Left ventricle myocardium superior (tissue), 1 donor: ENCODE measurements at regions of chr10 and their contacts with region 1.

Region 1: DNA sequence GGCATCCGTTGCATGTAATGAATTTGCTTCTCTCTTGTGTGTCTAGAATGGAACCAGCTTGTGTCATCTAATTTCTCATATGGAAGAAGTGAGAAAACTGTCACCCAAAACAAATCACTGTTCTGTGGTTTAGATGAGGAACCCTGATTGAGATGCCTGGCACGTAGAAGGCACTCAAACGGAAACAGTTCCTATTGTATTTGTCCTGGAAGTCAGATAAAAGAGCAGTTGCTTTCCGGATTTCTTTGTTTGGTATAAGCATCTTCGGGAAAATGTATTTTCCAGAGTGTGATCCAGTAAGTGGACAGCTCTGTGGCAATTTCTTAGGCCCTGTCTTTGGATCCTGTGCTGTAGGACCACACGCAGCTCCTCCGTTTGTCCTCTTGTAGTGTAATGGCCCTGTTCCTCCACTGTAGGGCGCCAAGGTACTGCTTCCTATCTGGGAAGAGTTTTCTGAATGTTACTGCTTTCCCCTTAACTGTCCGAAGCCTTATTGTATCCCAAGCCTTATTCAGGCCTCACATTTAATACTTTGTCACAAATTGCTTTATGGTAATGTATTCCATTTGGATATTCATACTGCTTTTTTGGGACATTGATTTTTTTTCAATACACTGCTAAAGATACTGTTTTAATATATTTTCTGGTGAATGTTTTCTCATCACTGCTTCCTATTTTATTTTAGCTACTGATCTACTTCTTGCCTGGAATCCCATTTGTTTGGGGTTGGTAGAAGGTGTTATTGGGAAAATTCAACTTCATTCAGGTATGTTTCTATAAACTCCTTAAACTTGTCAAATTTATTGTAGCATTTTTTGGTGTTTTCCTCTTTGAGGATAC is 24.8 kb downstream of the INPP5F start:
- DNase-seq: peak; percentile 48
- ATAC-seq: peak; percentile 96

Region 2: DNA sequence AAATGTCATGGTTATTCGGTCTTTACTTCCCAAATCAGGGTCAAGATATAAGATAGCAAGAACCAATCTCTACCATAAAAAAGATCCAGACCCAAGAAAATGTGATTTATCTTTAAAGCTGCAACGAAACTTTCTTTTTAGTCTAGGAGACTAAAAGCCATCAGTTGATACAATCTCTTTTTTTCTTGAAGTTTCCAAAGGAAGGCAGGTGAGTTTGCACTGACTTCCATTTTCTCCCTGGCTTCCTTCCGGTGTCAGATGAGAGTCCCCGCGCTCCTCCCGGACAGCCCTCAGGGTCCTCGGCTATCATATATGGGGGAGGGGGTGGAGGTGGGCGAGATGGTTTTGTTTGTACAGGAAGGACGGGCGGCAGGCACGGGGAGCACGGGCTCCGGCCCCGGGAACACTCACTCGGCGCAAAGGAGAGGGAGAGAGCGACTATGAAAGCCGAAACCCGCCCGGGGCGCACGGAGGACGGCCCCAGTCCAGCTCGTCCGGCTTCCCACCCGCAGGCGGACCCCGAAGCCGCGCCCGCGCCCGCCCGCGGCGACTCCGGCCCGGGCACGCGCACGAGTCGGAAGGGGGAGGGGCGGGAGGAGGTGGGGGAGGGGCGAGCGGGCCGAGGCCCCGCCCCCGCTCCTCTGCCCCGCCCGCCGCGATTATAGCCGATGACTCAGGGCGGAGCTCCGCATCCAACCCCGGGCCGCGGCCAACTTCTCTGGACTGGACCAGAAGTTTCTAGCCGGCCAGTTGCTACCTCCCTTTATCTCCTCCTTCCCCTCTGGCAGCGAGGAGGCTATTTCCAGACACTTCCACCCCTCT is 99.7 kb before region 1 on chr10 and contains the start of gene BAG3:
- intact Hi-C with region 1: no loop called
- DNase-seq: peak; percentile 97
- ATAC-seq: peak; percentile 91
- total RNA-seq, gene BAG3: 151 TPM

Region 3: GRCh38 chr10:119686439-119687191 is 64.0 kb before region 1 on chr10:
- intact Hi-C with region 1: loop called (anchors 2 kb)
- DNase-seq: peak; percentile 82
- ATAC-seq: peak; percentile 90

Region 4: DNA sequence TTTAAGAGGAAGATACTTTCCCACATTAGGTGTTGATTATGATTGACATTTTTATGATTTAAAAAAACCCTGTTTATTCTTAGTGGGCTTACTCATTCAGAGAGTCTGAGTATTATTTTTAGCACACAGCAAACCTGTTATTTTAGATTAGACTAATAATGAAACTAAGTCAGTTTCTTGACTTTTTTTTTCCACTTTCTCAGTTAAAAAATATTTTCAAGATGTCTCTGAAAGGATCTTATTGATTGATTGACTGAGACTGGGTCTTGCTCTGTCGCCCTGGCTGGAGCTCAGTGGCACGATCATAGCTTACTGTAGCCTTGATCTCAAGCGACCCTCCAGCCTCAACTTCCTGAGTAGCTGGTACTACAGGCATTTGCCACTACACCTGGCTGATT is 45.2 kb before region 1 on chr10:
- intact Hi-C with region 1: no loop called
- DNase-seq: no peak
- ATAC-seq: no peak

Region 5: DNA sequence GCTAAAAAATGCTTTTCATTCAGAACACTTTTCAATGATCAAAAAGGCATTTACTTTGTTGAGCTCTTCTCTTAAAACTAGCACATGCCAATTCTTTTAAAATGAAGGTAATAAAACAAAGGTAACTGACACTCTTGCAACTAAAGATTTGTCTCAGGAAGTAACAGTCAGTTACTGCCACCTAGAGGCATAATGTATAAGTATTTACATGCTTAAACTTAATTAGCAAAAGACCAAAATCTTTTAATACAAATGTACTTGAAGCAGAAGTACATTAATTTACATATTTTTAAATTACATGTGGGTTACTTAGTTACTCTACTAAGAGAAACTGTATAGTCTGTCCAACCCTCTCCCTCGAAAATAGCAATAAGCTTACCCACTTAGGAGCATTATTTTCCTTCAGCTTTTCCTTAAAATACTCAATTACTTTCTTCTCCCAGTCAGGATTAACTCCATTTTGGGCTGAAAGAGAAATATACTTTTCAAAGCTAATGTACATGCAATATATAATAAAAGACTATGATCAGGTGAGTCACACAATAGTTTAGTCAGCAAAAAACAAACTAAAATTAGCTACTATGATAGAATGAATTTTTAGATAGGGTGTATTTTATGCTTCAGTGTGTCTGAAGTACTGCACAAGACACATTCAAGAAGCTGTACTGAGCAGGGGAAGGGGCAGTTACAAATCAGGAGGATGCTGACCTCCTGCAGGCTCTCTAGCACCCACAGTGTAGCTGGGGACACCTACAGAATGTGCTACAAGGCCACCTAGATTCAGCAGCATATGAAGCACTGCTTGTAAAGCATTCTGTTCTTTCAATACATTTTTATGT is 109.0 kb after region 1 on chr10:
- intact Hi-C with region 1: loop called (anchors 10 kb)
- DNase-seq: no peak
- ATAC-seq: no peak